Natural killer cell (primary cell): ENCODE measurements at regions of chr10 and their contacts with region 1.

Region 1: DNA sequence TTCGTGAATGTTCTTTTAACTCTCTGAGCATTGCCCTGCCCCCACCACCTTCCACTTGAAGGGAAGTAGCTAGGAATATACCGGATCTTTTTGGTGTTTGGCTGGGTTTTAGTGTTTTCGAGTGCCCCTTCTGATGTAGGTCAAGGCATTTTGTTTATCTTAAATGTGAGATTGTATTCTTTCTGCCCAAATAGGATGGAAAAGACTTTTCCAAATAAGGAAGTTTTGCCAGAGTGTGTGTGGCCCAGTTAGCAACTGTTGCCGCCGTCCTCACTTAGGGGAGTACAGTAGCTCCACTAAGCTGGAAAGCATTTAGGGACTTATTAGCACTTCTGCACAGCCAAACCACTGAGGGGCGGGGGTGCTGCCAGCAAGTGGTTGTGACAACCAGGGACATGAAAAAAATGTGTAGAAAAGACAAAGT is 29.8 kb upstream of the VCL start:
- DNase-seq: peak; percentile 55 to 65
- ATAC-seq: peak; percentile 92 to 96 (median 92)
- H3K4me3 ChIP-seq: no peak overlapping the region
- H3K4me3 Mint-ChIP-seq: peak overlapping the region; percentile 71
- H3K27ac ChIP-seq: peak overlapping the region; percentile 37
- H3K27ac Mint-ChIP-seq: peak overlapping the region; percentile 59 to 86
- H3K4me1 ChIP-seq: peaks cover 37% of the 10 kb centered on the region
- H3K4me1 Mint-ChIP-seq: peaks cover 27 to 41% of the 10 kb centered on the region in 2 donors
- H3K27me3 ChIP-seq: no peaks in the 10 kb centered on the region
- H3K27me3 Mint-ChIP-seq: no peaks in the 10 kb centered on the region
- CTCF ChIP-seq: no peak

Region 2: GRCh38 chr10:73991884-73992245 is 23.8 kb after region 1 on chr10:
- intact Hi-C with region 1: loop called (anchors 2 kb)
- DNase-seq: peak; percentile 55 to 90
- ATAC-seq: peak; percentile 98 to 100 (median 99)
- H3K4me3 ChIP-seq: no peak overlapping the region
- H3K4me3 Mint-ChIP-seq: peak overlapping the region; percentile 10
- H3K27ac ChIP-seq: peak overlapping the region; percentile 68
- H3K27ac Mint-ChIP-seq: peak overlapping the region; percentile 29 to 80
- H3K4me1 ChIP-seq: peaks cover 21% of the 10 kb centered on the region
- H3K4me1 Mint-ChIP-seq: peaks cover 33 to 52% of the 10 kb centered on the region in 2 donors
- H3K27me3 ChIP-seq: no peaks in the 10 kb centered on the region
- H3K27me3 Mint-ChIP-seq: no peaks in the 10 kb centered on the region
- CTCF ChIP-seq: no peak

Region 3: GRCh38 chr10:74371696-74372095 is 403.6 kb after region 1 on chr10:
- intact Hi-C with region 1: no loop called
- DNase-seq: no peak
- ATAC-seq: no peak
- H3K4me3 ChIP-seq: no peak overlapping the region
- H3K4me3 Mint-ChIP-seq: no peak overlapping the region
- H3K27ac ChIP-seq: no peak overlapping the region
- H3K27ac Mint-ChIP-seq: no peak overlapping the region
- H3K4me1 ChIP-seq: no peaks in the 10 kb centered on the region
- H3K4me1 Mint-ChIP-seq: no peaks in the 10 kb centered on the region
- H3K27me3 ChIP-seq: no peaks in the 10 kb centered on the region
- H3K27me3 Mint-ChIP-seq: no peaks in the 10 kb centered on the region
- CTCF ChIP-seq: no peak